Aorta (tissue), 5 donors: ENCODE measurements at regions of chr14 and their contacts with region 1.

Region 1: DNA sequence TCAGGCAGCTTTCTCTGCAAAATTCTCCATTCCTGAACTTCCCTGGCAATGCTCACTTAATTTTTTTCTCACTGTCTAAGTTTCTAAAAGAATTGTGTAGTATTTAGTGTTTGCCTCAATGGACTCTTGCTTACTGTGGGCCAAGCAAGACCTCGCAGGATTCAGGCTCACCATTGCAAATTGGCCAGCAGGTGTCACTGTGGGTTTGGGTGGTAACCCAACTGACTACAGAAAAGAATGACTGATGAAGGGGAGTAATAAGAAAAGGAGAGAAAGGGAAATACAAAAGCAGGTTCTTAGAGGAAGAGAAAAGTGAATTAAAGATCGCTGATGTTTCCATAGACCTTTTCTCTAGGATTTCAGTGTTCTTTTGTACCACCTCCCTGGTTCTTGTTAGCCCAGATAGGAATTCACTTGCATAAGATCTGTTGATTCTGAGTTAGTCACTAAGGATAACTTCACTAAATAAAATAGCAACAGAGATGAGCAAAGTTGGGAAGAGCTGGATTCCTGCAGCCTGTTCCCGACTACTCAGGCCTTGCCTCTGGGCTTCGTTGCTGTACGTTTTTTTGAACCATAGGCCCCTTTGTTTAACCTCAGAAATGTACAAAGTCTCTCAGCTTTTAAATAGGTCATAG is 386.5 kb upstream of the DDHD1 start:
- DNase-seq: peak; percentile 79 to 82
- ATAC-seq: peak; percentile 87
- H3K4me3 ChIP-seq: no peak overlapping the region
- H3K27ac ChIP-seq: no peak overlapping the region
- H3K4me1 ChIP-seq: no peaks in the 10 kb centered on the region
- H3K27me3 ChIP-seq: no peaks in the 10 kb centered on the region

Region 2: DNA sequence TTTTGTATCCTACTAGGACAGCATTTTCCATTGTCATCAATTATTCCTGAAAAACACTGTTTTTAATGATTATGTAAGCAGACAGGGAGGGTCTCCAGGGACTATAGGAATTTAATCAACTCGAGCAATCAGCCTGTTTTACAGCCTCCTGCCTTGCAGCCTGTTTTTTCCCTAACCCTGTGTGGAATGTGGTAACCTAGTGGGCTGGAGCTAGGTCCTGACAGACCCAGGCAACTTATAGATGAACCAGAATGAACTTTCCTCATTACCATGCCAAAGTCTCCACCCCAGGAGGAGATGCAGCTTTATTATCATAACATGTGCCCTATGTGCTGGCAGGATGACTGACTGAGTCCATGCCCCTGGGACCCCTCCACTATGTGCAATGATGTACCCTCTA is 41.9 kb after region 1 on chr14:
- intact Hi-C with region 1: no loop called
- DNase-seq: no peak
- ATAC-seq: no peak
- H3K4me3 ChIP-seq: no peak overlapping the region
- H3K27ac ChIP-seq: no peak overlapping the region
- H3K4me1 ChIP-seq: no peaks in the 10 kb centered on the region
- H3K27me3 ChIP-seq: peaks cover 0 to 2% of the 10 kb centered on the region in 2 donors

Region 3: GRCh38 chr14:54329082-54329695 is 789.6 kb after region 1 on chr14:
- intact Hi-C with region 1: loop called in 1 of 2 experiments (anchors 5 kb)
- DNase-seq: no peak
- ATAC-seq: peak; percentile 85
- H3K4me3 ChIP-seq: no peak overlapping the region
- H3K27ac ChIP-seq: no peak overlapping the region
- H3K4me1 ChIP-seq: no peaks in the 10 kb centered on the region
- H3K27me3 ChIP-seq: no peaks in the 10 kb centered on the region

Region 4: DNA sequence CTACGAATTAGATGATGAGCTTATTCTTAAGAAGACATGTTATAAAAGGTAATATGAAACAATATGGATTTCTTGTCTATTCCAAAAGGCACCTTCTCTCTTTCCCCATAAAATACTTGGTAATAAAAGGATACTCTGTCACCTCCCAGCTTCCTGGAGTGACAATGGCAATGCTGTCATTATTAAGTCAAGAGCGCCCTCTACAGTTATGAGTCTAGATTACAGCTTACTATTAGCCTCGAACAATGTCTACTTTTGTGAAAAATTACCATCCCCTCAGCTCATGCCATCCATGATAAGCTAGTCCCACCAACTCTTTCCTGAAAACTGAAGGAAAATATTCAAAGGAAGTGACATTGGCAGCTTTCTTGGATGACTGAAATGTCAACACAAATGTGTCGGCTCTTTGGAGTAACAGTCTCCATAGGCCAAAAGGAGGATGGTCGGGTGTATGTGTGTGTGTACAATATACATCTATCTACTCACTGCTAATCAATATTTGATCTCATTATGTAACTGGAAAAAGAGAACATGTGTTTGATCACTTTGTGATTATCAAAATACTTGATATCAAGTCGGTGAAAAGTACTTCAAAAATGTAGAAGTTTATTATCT is 808.5 kb after region 1 on chr14:
- intact Hi-C with region 1: loop called (anchors 2 to 5 kb)
- DNase-seq: no peak
- ATAC-seq: peak; percentile 75
- H3K4me3 ChIP-seq: no peak overlapping the region
- H3K27ac ChIP-seq: no peak overlapping the region
- H3K4me1 ChIP-seq: peaks cover 0 to 6% of the 10 kb centered on the region in 2 donors
- H3K27me3 ChIP-seq: no peaks in the 10 kb centered on the region